A549 (cell line): ENCODE measurements at regions of chr9 and their contacts with region 1.

Region 1: GRCh38 chr9:136790927-136791641 is at the start of gene TMEM141:
- DNase-seq: peak; percentile 90 to 100
- ATAC-seq: peak; percentile 85 to 90
- H3K4me3 ChIP-seq: peak within 1 kb of the TSS; percentile 88
- H3K27ac ChIP-seq: peak within 1 kb of the TSS; percentile 91 to 94
- H3K4me1 ChIP-seq: peaks cover 45% of the 10 kb centered on the region
- CTCF ChIP-seq: no peak
- EP300 ChIP-seq: no peak
- POLR2A ChIP-seq: peak; percentile 75
- RAD21 ChIP-seq: no peak
- polyA plus RNA-seq, gene TMEM141: 64.5 and 78.0 TPM in 2 replicates

Region 2: GRCh38 chr9:136605988-136606660 is 185.0 kb before region 1 on chr9:
- CTCF ChIA-PET with region 1: no interaction called
- POLR2A ChIA-PET with region 1: no interaction called
- DNase-seq: no peak
- ATAC-seq: no peak
- H3K4me3 ChIP-seq: no peak overlapping the region
- H3K27ac ChIP-seq: 0 out of 6 replicates have a peak overlapping the region, but pooled peaks of 1 of the 2 experiments have one; percentile 3
- H3K4me1 ChIP-seq: peaks cover 14% of the 10 kb centered on the region
- CTCF ChIP-seq: no peak
- EP300 ChIP-seq: no peak
- POLR2A ChIP-seq: no peak
- RAD21 ChIP-seq: no peak

Region 3: GRCh38 chr9:136769710-136770191 is 21.3 kb before region 1 on chr9:
- CTCF ChIA-PET with region 1: interaction called, 625 read pairs
- POLR2A ChIA-PET with region 1: no interaction called
- DNase-seq: peak; percentile 58 to 72
- ATAC-seq: peak; percentile 87 to 89
- H3K4me3 ChIP-seq: peak overlapping the region; percentile 31
- H3K27ac ChIP-seq: peak overlapping the region; percentile 54 to 85; a peak in 5 of 6 replicates
- H3K4me1 ChIP-seq: 0 out of 3 replicates have a peak, but pooled peaks cover 8% of the 10 kb centered on the region
- CTCF ChIP-seq: peak; percentile 56
- EP300 ChIP-seq: no peak
- POLR2A ChIP-seq: no peak
- RAD21 ChIP-seq: peak in 1 of 2 experiments; percentile 34; a peak in 3 of 5 replicates

Region 4: GRCh38 chr9:136807281-136808074 is 16.4 kb after region 1 on chr9 and contains the start of gene RABL6:
- CTCF ChIA-PET with region 1: interaction called, 110 read pairs
- POLR2A ChIA-PET with region 1: interaction called, 3 read pairs
- DNase-seq: peak; percentile 69 to 91
- ATAC-seq: peak; percentile 80 to 83
- H3K4me3 ChIP-seq: peak within 1 kb of the TSS; percentile 88
- H3K27ac ChIP-seq: peak within 1 kb of the TSS; percentile 95 to 98
- H3K4me1 ChIP-seq: peaks cover 24% of the 10 kb centered on the region
- CTCF ChIP-seq: no peak
- EP300 ChIP-seq: no peak
- POLR2A ChIP-seq: peak; percentile 92
- RAD21 ChIP-seq: no peak
- polyA plus RNA-seq, gene RABL6: 46.8 and 53.5 TPM in 2 replicates

Region 5: GRCh38 chr9:136840140-136840687 is 49.1 kb after region 1 on chr9:
- CTCF ChIA-PET with region 1: interaction called, 30 read pairs
- POLR2A ChIA-PET with region 1: no interaction called
- DNase-seq: no peak
- ATAC-seq: no peak
- H3K4me3 ChIP-seq: no peak overlapping the region
- H3K27ac ChIP-seq: peak overlapping the region in 1 of 2 experiments; percentile 90; a peak in 3 of 6 replicates
- H3K4me1 ChIP-seq: peaks cover 56% of the 10 kb centered on the region
- CTCF ChIP-seq: no peak
- EP300 ChIP-seq: no peak
- POLR2A ChIP-seq: no peak
- RAD21 ChIP-seq: no peak

Region 6: DNA sequence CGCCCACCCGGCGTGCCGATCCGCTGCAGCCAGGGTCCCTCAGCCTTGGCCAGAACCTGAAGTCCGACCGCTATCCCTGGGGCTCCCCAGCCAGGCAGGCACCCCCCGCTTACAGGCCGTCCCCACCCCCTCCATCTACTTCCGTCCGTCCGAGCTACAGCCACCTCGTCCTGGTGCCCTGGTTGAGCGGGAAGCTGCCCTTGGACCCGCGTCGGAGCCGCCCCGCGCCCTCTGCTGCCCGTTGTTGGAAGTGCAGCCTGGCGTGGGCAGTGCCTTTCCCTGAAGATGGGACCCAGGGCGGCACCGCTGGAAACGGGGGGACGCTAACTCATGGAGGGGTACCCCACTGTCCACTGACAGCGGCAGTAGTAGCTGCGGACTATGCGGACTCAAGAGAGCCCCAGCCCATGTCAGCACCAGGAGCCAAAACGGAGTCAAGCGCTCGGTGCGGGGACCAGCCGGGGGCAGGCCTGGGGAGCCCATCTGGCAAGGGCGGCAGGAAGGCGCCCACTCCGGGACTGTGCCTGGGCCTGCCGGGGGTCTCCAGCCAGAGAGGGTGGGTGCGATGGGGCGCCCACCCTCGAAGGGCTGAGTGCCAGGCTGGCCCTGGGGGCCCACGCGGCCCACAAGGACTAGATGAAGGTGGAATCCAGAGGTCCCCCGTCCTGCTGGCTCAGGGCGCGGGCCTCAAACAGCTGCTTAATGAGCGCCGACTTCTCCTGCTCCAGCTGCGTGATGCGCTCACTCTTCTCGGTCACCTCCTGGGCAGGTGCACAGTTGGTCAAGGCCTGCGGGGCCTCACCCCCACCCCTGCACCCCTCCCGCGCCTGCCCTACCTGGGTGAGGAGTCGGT is 273.2 kb after region 1 on chr9:
- CTCF ChIA-PET with region 1: interaction called, 11 read pairs
- POLR2A ChIA-PET with region 1: no interaction called
- DNase-seq: peak in 1 of 2 experiments; percentile 64
- ATAC-seq: peak; percentile 67 to 78
- H3K4me3 ChIP-seq: no peak overlapping the region
- H3K27ac ChIP-seq: peak overlapping the region in 1 of 2 experiments; percentile 64; a peak in 4 of 6 replicates
- H3K4me1 ChIP-seq: peaks cover 15% of the 10 kb centered on the region
- CTCF ChIP-seq: peak; percentile 78
- EP300 ChIP-seq: no peak
- POLR2A ChIP-seq: no peak
- RAD21 ChIP-seq: peak; percentile 60 to 65